ENCODE measurements at regions of chr17 and their contacts with region 1.

Region 1: DNA sequence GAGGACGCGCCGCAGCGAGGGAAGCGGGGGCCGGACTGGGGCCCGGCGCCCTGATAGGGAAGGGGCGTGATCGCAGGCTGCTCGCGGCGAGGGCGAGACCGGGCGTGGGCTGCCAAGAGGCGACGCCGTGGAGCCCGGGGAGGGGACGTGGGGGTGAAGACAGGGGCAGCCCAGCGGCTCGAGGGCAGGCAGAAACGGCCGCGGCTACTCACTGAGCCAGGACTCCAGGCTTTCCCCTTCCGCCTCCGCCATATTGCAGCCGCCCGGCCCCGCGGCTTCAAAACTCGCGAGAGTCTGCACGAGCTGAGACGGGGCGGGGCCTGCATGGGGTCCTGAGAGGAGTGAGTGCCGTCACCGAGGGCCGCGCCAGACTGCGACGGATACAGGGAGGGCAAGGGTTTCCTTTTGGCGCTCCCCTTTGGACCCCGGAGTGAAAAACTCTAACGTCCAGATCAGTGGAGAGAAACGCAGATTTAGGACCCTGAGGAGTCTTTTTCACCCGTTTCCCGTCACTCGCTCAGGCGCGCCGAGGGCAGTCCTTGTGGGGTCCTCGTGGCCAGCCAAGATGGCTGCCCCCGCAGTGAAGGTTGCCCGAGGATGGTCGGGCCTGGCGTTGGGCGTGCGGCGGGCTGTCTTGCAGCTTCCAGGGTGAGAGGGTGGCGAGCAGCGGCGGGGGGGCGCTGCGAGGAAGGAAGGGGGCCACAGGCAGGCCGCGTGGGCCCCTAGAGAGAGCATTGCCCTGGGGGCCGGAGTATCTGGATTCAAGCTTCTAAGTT is at the starts of genes GGA3 and MRPS7:
- DNase-seq: peak; percentile 99
- H3K4me3 ChIP-seq: peak within 1 kb of the TSS; percentile 79
- H3K27ac ChIP-seq: peak within 1 kb of the TSS; percentile 68
- H3K4me1 ChIP-seq: peaks cover 26% of the 10 kb centered on the region
- CTCF ChIP-seq: no peak; the same call in none of the 2 replicates
- total RNA-seq, gene GGA3: 52.3 and 77.6 TPM in 2 replicates
- total RNA-seq, gene MRPS7: 123 and 127 TPM in 2 replicates

Region 2: DNA sequence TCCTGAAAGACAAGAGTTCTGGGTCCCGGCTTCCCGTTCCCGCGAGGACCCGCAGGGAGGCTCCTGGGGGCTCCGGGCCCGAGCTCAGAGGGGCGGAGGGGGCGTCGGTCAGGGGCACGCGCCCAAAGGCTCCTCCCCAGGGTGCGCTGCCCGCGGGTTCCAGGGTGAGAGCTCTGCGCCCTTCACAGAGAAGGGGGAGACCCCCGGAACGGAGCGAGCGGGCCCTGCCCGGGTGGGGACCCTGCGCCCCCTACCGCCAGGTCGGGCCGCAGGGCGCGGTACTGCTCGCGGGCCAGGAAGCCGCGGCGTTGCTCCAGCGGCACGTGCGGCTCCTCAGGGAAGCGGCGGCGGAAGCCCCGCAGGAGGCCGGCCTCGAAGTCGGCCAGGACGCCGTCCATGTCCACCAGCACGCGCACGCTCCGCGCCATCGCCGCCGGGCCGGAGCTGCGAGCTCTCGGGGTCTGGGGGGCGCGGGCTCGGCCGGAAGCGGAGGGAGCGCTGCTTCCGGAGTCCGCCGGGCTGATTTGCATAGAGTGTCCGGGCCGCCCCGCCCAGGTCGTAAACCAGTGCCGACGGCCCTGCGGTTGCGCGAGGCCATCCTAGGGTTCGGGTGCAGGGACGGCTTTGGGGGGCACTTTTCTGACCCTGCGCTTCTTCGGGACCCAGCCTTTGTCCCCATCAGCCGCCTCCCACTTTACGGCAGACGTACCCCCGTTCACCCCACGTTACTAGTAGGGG is 130.1 kb before region 1 on chr17 and contains the start of gene NT5C:
- CTCF ChIA-PET with region 1: no interaction called
- POLR2A ChIA-PET with region 1: no interaction called
- intact Hi-C with region 1: no loop called
- DNase-seq: peak; percentile 95
- H3K4me3 ChIP-seq: peak within 1 kb of the TSS; percentile 89
- H3K27ac ChIP-seq: peak within 1 kb of the TSS; percentile 69
- H3K4me1 ChIP-seq: peaks cover 28% of the 10 kb centered on the region
- CTCF ChIP-seq: peak; percentile 90
- total RNA-seq, gene NT5C: 229 and 259 TPM in 2 replicates

Region 3: GRCh38 chr17:75244133-75244866 is 17.2 kb before region 1 on chr17:
- CTCF ChIA-PET with region 1: interaction called, 6 read pairs
- POLR2A ChIA-PET with region 1: interaction called, 36 read pairs
- intact Hi-C with region 1: no loop called
- DNase-seq: peak; percentile 94
- H3K4me3 ChIP-seq: peak overlapping the region; percentile 38
- H3K27ac ChIP-seq: peak overlapping the region; percentile 75
- H3K4me1 ChIP-seq: peaks cover 58% of the 10 kb centered on the region
- CTCF ChIP-seq: no peak

Region 4: GRCh38 chr17:75250009-75250471 is 11.5 kb before region 1 on chr17:
- CTCF ChIA-PET with region 1: interaction called, 6 read pairs
- POLR2A ChIA-PET with region 1: interaction called, 36 read pairs
- intact Hi-C with region 1: no loop called
- DNase-seq: peak; percentile 50
- H3K4me3 ChIP-seq: peak overlapping the region; percentile 9
- H3K27ac ChIP-seq: peak overlapping the region; percentile 39
- H3K4me1 ChIP-seq: peaks cover 50% of the 10 kb centered on the region
- CTCF ChIP-seq: no peak

Region 5: GRCh38 chr17:75405365-75406221 is 144.1 kb after region 1 on chr17 and contains the start of gene GRB2:
- CTCF ChIA-PET with region 1: interaction called, 3 read pairs
- POLR2A ChIA-PET with region 1: interaction called, 16 read pairs
- intact Hi-C with region 1: no loop called
- DNase-seq: peak; percentile 100
- H3K4me3 ChIP-seq: peak within 1 kb of the TSS; percentile 84
- H3K27ac ChIP-seq: peak within 1 kb of the TSS; percentile 81
- H3K4me1 ChIP-seq: peaks cover 62% of the 10 kb centered on the region
- CTCF ChIP-seq: no peak
- total RNA-seq, gene GRB2: 240 and 244 TPM in 2 replicates

Measured in OCI-LY7 (cell line).